ENCODE measurements at regions of chr7 and their contacts with region 1.

Region 1: GRCh38 chr7:1743481-1744230 is 73.6 kb downstream of the ELFN1 start:
- DNase-seq: no peak
- ATAC-seq: no peak
- H3K4me3 ChIP-seq: no peak overlapping the region
- H3K27ac ChIP-seq: no peak overlapping the region
- H3K4me1 ChIP-seq: peaks cover 13% of the 10 kb centered on the region
- H3K27me3 ChIP-seq: no peaks in the 10 kb centered on the region
- CTCF ChIP-seq: no peak

Region 2: DNA sequence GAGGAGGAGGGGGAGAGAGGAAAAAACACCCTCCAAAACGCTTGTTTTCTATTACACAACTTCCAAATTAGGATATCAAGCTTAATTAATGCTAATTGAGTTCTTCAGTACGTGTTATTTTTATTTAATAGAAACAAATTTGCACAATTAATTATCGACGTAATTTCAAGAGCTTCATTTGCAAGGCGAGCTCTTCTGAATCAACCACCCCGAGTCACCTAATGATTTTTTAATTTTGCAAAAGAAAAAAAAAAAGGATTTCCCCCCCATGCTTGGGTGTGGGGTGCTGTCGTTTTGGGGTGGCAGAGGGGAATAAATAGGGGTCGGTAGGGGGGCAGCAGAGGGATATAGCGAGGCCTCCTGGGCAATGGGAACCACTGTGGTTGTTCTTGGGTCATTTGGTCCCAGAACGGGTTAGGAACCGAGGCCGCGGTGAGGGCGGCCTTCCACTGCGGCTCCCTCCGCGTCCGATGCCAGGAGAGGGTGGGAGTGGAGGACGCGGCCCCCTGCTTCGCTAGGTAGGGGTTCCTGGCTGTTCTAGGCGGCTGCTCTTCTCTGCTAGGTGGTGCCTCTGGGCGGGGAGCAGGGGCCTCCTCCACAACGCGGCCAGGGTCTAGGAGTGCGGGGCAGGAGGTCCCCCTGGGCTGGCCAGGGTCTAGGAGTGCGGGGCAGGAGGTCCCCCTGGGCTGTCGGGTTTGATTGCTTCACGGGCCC is 503.7 kb before region 1 on chr7:
- CTCF ChIA-PET with region 1: no interaction called
- POLR2A ChIA-PET with region 1: interaction called, 10 read pairs
- in situ Hi-C with region 1: no loop called
- intact Hi-C with region 1: no loop called
- DNase-seq: no peak
- ATAC-seq: no peak
- H3K4me3 ChIP-seq: no peak overlapping the region
- H3K27ac ChIP-seq: no peak overlapping the region
- H3K4me1 ChIP-seq: peaks cover 6% of the 10 kb centered on the region; the same call in 1 of the 2 replicates
- H3K27me3 ChIP-seq: peaks cover 30% of the 10 kb centered on the region
- CTCF ChIP-seq: no peak

Region 3: DNA sequence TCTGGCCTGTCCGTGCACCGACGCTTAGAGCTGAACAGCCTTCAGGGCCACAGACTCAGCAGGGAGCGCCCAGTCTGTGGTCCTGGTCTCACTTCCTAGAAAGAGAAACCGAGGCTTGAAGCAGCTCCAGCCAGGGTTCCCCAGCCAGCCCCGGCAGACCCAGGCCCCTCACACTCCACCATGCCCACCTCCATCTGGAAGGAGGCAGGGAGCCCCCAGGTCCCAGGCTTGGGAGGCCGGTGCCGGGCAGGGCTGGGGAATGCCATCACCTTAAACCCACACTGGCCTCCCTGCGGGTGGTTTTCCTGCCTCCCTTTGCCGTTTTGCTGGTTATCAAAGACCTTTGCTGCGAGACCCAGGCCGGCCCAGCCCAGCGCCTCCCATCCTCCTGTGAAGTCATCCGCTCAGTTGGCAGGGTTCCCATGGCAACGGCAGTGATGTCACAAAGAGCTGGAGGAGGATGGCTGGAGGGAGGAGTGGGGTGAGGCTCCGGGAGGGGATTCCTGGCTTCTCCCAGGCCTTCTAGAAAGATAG is 49.6 kb before region 1 on chr7:
- CTCF ChIA-PET with region 1: no interaction called
- POLR2A ChIA-PET with region 1: no interaction called
- in situ Hi-C with region 1: no loop called
- intact Hi-C with region 1: no loop called
- DNase-seq: no peak
- ATAC-seq: no peak; the same call in 1 of the 2 replicates
- H3K4me3 ChIP-seq: no peak overlapping the region
- H3K27ac ChIP-seq: no peak overlapping the region
- H3K4me1 ChIP-seq: peaks cover 26% of the 10 kb centered on the region
- H3K27me3 ChIP-seq: no peaks in the 10 kb centered on the region
- CTCF ChIP-seq: no peak

Region 4: DNA sequence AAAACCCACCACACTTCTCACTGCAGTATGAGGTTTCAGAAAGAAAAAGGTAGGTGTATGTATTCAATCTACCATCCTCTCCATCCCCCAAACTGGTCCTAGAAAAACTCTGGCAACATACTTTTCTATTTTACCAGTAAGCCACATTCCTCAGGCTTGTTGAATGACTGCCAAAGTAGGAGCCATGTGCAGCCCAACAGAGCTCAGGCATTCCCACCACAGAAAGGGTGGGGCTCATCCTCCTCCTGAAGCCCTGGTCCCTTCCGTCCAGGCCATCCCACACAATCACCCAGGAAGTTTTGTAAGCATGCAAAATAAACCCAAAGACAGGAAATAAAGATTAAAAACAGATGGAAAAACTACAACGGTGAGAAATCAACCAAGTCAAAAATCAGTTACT is 431.9 kb after region 1 on chr7:
- CTCF ChIA-PET with region 1: no interaction called
- POLR2A ChIA-PET with region 1: no interaction called
- in situ Hi-C with region 1: no loop called
- intact Hi-C with region 1: no loop called
- DNase-seq: no peak
- ATAC-seq: no peak
- H3K4me3 ChIP-seq: no peak overlapping the region
- H3K27ac ChIP-seq: no peak overlapping the region
- H3K4me1 ChIP-seq: peaks cover 10% of the 10 kb centered on the region; the same call in 1 of the 2 replicates
- H3K27me3 ChIP-seq: no peaks in the 10 kb centered on the region
- CTCF ChIP-seq: no peak